ENCODE measurements at regions of chr17 and their contacts with region 1.

Region 1: GRCh38 chr17:73231841-73232586 is 29.7 kb downstream of the CPSF4L start:
- DNase-seq: peak; percentile 99
- ATAC-seq: peak; percentile 97

Region 2: DNA sequence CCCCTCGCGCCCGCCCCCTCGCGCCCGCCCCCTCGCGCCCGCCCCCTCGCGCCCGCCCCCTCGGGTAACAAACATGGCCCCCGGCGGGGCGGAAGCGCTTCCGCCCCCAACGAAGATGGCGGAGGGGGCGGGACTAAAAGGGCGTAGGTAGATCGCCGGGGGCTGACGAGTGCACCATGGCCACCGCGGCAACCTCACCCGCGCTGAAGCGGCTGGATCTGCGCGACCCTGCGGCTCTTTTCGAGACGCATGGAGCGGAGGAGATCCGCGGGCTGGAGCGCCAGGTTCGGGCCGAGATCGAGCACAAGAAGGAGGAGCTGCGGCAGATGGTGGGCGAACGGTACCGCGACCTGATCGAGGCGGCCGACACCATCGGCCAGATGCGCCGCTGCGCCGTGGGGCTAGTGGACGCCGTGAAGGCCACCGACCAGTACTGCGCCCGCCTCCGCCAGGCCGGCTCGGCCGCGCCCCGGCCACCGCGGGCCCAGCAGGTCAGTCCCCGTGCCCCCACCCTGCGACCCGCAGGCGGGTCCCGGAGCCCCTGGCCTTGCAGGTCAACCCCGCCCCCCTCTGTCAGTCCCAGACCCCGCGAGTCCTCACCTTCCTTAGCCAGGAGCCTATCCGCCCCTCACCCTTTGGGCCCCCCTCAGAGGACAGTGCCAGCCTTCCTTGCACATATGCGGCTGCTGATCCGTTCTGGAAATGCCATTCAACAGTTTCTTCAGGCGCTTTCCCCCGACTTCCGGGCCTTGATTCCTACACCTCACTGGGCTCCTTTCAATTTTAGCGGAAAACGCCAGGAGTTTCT is 38.9 kb before region 1 on chr17 and contains the start of gene COG1:
- intact Hi-C with region 1: loop called (anchors 2 kb)
- DNase-seq: peak; percentile 94
- ATAC-seq: peak; percentile 88
- total RNA-seq, gene COG1: 49.3 TPM

Measured in Right ventricle myocardium inferior (tissue), 1 donor.